ENCODE measurements at regions of chr5 and their contacts with region 1.

Region 1: GRCh38 chr5:178732281-178732680 is 1.8 kb upstream of the ZNF354A start:
- H3K4me3 Mint-ChIP-seq: no peak overlapping the region
- H3K27ac Mint-ChIP-seq: no peak overlapping the region
- H3K4me1 Mint-ChIP-seq: peaks cover 4% of the 10 kb centered on the region
- H3K27me3 Mint-ChIP-seq: peaks cover 3% of the 10 kb centered on the region

Region 2: DNA sequence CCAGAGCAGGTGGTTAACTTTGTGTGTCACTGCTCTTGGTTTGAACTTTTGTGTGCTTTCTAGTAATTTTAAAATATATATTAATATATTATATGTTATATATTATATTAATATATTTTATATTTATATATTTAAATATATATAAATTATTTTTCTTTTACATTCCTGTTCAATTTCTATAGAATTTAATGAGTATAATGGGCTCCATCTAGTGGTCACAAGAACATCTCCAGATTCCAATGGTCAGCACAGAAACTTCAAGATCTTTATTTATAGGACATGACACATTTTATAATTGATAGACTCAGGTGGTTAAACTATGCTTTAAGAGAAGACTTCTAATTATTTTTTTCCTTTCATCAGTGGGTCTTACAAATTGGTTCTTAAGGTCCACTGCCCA is 181.2 kb before region 1 on chr5:
- intact Hi-C with region 1: no loop called
- H3K4me3 Mint-ChIP-seq: no peak overlapping the region
- H3K27ac Mint-ChIP-seq: no peak overlapping the region
- H3K4me1 Mint-ChIP-seq: peaks cover 18% of the 10 kb centered on the region
- H3K27me3 Mint-ChIP-seq: no peaks in the 10 kb centered on the region

Region 3: GRCh38 chr5:178626484-178627258 is 105.6 kb before region 1 on chr5 and contains the start of gene CLK4:
- intact Hi-C with region 1: loop called (anchors 5 kb)
- H3K4me3 Mint-ChIP-seq: peak within 1 kb of the TSS; percentile 95
- H3K27ac Mint-ChIP-seq: peak within 1 kb of the TSS; percentile 99
- H3K4me1 Mint-ChIP-seq: peaks cover 7% of the 10 kb centered on the region
- H3K27me3 Mint-ChIP-seq: peaks cover 8% of the 10 kb centered on the region

Region 4: DNA sequence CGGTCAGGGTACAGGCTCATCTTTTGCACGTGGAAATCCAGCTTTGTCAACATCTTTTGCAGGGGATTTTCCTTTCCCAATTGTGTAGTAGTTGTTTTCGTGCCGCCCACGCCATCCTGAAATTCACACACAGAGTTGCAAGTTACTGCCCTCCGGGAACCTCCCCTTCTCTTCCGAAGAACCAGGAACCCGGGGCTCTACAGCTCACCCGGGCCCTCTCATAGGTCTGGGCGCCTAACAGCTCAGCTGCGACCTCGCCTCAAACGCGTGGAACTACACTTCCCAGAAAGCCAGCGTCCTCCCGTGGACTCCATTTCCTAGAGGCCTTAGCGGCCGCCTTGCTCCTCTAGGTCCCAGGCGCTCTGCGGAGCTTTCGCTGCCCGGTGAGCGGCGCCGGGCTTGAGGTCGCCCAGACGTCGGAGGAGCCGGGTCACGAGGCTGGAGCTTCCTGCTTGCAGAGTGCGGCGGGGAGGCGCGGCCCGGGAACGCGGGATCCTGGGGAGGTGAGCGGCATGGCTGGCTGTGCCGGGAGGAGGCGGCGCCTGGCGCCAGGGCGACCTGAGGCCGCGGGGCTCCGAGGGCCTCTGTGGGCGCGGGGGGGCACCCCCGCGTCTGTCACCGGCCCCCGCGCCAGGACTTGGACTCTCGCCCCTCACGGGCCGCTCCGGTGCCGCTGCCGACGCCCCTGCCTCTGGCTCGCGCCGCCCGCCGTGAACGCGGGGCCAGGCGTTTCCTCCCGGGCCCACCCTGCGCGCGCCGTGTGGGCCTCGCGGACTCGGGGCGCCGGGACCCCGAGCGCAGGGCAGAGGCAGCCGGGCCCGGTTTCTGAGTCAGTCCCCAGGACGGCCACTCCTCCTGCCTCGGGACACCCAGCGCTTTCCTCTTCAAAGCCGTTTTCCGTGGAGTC is 127.6 kb after region 1 on chr5 and contains the start of gene ZNF354B:
- intact Hi-C with region 1: loop called (anchors 1 kb)
- H3K4me3 Mint-ChIP-seq: peak within 1 kb of the TSS; percentile 90
- H3K27ac Mint-ChIP-seq: peak within 1 kb of the TSS; percentile 87
- H3K4me1 Mint-ChIP-seq: peaks cover 21% of the 10 kb centered on the region
- H3K27me3 Mint-ChIP-seq: no peaks in the 10 kb centered on the region

Region 5: GRCh38 chr5:178991190-178992145 is 259.2 kb after region 1 on chr5:
- intact Hi-C with region 1: no loop called
- H3K4me3 Mint-ChIP-seq: no peak overlapping the region
- H3K27ac Mint-ChIP-seq: no peak overlapping the region
- H3K4me1 Mint-ChIP-seq: no peaks in the 10 kb centered on the region
- H3K27me3 Mint-ChIP-seq: peaks cover 38% of the 10 kb centered on the region

Region 6: GRCh38 chr5:179060116-179061008 is 328.1 kb after region 1 on chr5 and contains the start of gene ZNF354C:
- intact Hi-C with region 1: loop called (anchors 1 kb)
- H3K4me3 Mint-ChIP-seq: peak within 1 kb of the TSS; percentile 78
- H3K27ac Mint-ChIP-seq: peak within 1 kb of the TSS; percentile 81
- H3K4me1 Mint-ChIP-seq: peaks cover 4% of the 10 kb centered on the region
- H3K27me3 Mint-ChIP-seq: peaks cover 5% of the 10 kb centered on the region

Region 7: GRCh38 chr5:180047667-180048066 is 1315.4 kb after region 1 on chr5:
- intact Hi-C with region 1: no loop called
- H3K4me3 Mint-ChIP-seq: no peak overlapping the region
- H3K27ac Mint-ChIP-seq: peak overlapping the region; percentile 58
- H3K4me1 Mint-ChIP-seq: peaks cover 60% of the 10 kb centered on the region
- H3K27me3 Mint-ChIP-seq: no peaks in the 10 kb centered on the region

Measured in dendritic cell treated with granulocyte-macrophage colony-stimulating factor and Interleukin-4, amounts not matched to agents 40 ng/mL and 50 ng/mL, for 4 days (primary cell).